HEK293T (cell line): ENCODE measurements at regions of chr17 and their contacts with region 1.

Region 1: DNA sequence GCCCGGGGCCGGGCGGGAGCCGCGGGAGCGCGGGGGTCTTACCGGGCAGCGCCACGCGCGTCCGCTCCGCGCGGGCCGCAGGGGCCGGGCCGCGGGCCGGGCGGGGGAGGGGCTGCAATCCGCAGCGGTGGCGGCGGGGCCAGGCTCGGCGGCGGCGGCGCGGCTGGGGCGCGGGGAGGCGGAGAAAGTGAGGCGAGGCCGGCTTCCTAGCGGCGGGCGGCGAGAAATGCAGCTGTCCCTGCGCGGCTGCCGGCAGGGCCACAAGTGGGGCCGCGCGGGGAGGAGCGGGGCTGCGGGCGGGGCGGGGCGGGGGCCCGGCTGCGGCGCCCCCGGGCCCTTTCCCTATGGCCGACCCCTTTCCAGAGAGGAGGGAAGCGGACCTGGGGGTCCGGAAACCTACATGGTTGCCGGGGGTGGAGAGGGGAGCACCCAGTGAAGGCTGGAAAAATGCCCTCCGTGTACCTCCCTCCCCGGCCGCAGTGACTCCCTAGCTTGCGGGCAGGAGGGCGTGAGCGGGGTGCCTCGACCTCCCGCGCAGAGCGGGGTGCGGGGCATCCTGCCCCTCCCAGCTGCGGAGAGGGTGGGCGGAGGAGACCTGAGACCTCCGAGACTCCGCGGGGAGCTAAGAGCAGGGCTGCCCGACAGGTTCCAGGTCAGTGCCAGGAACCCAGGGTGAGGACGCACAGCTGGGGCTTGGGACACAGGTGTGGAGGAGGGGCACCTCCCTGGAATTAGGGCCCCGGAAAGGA is at the start of gene CUEDC1:
- DNase-seq: peak; percentile 88

Region 2: GRCh38 chr17:57939797-57940196 is 15.6 kb before region 1 on chr17:
- CTCF ChIA-PET with region 1: interaction called, 5 read pairs
- POLR2A ChIA-PET with region 1: interaction called, 24 read pairs
- DNase-seq: no peak

Region 3: DNA sequence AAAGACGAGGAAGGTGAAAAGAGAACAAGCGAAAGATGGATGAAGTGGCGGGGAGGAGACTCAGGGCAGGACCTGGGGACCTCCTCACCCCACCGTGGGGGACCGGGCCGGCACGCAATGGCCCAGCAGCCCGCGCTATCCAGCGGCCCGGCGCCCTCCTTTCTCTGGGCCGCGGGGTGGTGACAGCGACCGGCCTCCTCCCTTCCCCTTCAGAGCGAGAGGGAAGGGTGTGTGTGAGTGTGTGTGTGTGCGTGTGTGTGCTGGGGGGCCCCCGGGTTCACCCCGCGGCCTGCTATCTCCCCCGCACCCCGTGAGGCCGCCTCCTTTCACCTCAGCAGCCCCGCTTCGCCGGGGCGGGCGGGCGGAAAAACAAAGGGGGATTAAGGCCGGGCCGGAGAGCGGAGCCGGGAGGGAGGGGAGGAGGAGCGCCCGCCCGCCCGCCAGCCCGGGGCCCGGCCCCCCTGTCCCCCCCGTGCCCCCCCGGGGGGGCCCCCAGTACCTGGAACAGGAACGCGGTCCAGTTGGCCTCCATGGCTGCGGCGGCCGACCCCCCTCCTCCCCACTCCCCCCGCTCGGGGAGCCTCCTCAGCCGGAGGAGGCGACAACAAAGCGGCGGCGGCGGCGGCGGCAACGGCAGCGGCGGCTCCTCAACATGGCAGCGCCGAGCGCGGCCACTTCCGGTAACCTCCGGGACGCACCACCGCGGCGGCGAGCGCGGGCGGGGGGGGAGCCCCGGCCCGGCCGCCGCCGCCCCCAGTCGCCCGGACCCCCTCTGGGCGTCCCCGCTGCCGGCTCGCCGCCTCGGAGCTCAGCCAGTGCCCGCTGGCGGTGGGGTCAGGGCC is 32.4 kb after region 1 on chr17 and contains the start of gene VEZF1:
- CTCF ChIA-PET with region 1: interaction called, 3 read pairs
- POLR2A ChIA-PET with region 1: interaction called, 15 read pairs
- DNase-seq: peak; percentile 74

Region 4: DNA sequence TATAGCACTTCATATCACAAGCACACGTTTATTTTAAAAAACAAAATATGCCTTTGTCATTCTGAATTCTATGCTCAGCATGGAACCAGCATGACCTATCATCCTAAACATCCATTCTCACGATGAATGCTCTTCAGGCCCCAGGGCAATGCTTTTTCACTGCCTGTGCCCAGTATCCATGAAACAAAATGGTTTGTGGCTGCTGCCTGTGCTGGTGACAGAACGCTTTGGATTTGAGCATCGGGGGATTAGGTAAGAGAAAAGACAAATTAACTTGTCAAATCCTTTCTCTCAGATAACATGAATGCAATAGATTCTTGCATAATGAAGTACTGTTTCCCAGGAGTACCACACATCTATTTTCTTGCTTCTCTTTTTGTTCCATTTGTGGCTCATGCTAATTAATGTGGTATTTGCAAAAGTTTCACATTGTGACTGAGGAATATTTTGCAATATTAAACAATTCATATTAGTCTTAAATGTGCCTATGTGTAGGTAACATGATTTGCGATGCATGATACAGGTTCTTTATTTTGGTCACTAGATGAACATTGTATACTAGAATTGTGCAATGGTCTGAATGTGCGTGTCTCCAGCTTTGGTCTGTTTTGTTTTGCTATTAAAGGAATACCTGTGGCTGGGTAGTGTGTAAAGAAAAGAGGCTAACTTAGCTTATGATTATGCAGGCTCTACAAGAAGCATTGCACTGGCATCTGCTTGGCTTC is 77.5 kb after region 1 on chr17:
- CTCF ChIA-PET with region 1: no interaction called
- POLR2A ChIA-PET with region 1: no interaction called
- DNase-seq: no peak